ENCODE measurements at regions of chr9 and their contacts with region 1.

Region 1: GRCh38 chr9:2047144-2047671 is 32.1 kb downstream of the SMARCA2 start:
- DNase-seq: no peak
- H3K4me3 ChIP-seq: no peak overlapping the region
- H3K27ac ChIP-seq: no peak overlapping the region
- H3K4me1 ChIP-seq: no peaks in the 10 kb centered on the region
- H3K27me3 ChIP-seq: no peaks in the 10 kb centered on the region
- CTCF ChIP-seq: no peak

Region 2: GRCh38 chr9:1995084-1995483 is 52.1 kb before region 1 on chr9:
- CTCF ChIA-PET with region 1: no interaction called
- POLR2A ChIA-PET with region 1: no interaction called
- intact Hi-C with region 1: loop called (anchors 5 kb)
- DNase-seq: peak; percentile 85
- H3K4me3 ChIP-seq: no peak overlapping the region
- H3K27ac ChIP-seq: peak overlapping the region; percentile 38
- H3K4me1 ChIP-seq: peaks cover 24% of the 10 kb centered on the region
- H3K27me3 ChIP-seq: no peaks in the 10 kb centered on the region
- CTCF ChIP-seq: no peak